ENCODE measurements at regions of chr12 and their contacts with region 1.

Region 1: GRCh38 chr12:93453633-93454032 is 11.9 kb upstream of the UBE2N start:
- DNase-seq: no peak
- H3K4me3 ChIP-seq: no peak overlapping the region
- H3K27ac ChIP-seq: no peak overlapping the region
- H3K4me1 ChIP-seq: no peaks in the 10 kb centered on the region
- H3K27me3 ChIP-seq: no peaks in the 10 kb centered on the region
- CTCF ChIP-seq: no peak
- POLR2A ChIP-seq: no peak

Region 2: GRCh38 chr12:91620992-91621391 is 1832.6 kb before region 1 on chr12:
- intact Hi-C with region 1: loop called (anchors 10 kb)
- DNase-seq: no peak
- H3K4me3 ChIP-seq: no peak overlapping the region
- H3K27ac ChIP-seq: no peak overlapping the region
- H3K4me1 ChIP-seq: no peaks in the 10 kb centered on the region
- H3K27me3 ChIP-seq: no peaks in the 10 kb centered on the region
- CTCF ChIP-seq: no peak
- POLR2A ChIP-seq: no peak